Panc1 (cell line): ENCODE measurements at regions of chr20 and their contacts with region 1.

Region 1: DNA sequence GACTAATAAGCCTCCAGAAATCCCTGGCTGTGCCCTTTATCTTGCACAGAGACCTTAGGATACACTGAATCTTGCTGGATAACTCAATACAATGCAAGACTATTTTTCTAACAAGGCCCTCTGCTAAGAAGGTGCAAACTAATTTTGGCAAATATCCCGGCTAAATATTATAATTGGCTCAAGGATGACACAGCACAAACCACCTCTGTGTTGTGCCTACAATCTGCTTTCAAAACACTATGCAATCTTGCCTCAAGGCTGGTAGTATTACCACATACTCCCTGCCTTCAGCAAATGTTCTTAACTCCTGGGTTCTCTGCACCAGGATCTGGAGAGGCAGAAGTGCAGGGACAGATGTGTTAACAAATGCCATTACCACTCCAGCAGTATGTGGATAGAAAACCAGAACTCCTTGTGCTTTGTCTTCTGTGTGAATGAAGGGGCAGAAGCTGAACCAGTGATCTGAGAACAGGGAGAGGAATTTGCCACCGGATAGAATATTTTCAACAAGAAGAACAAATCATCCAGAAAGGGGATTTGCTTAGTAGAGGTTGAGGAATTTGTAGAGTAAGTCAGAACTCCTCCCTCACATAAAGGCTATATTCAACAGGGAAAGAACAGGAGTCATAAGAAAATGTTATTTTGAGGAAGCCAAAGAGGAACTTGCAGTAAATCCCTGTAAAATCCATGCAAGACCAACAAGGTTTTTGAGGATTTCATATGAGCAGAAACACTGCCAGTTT is 74.1 kb upstream of the SLC4A11 start:
- DNase-seq: no peak
- ATAC-seq: peak; percentile 62; the same call in 1 of the 2 replicates
- H3K4me3 ChIP-seq: no peak overlapping the region
- H3K27ac ChIP-seq: no peak overlapping the region
- H3K4me1 ChIP-seq: no peaks in the 10 kb centered on the region
- H3K27me3 ChIP-seq: no peaks in the 10 kb centered on the region
- CTCF ChIP-seq: no peak

Region 2: GRCh38 chr20:3051385-3052019 is 261.6 kb before region 1 on chr20:
- CTCF ChIA-PET with region 1: interaction called, 3 read pairs
- POLR2A ChIA-PET with region 1: no interaction called
- in situ Hi-C with region 1: no loop called
- intact Hi-C with region 1: loop called (anchors 10 kb)
- DNase-seq: no peak
- ATAC-seq: no peak
- H3K4me3 ChIP-seq: no peak overlapping the region
- H3K27ac ChIP-seq: no peak overlapping the region
- H3K4me1 ChIP-seq: peaks cover 3% of the 10 kb centered on the region; the same call in 1 of the 2 replicates
- H3K27me3 ChIP-seq: no peaks in the 10 kb centered on the region
- CTCF ChIP-seq: no peak

Region 3: DNA sequence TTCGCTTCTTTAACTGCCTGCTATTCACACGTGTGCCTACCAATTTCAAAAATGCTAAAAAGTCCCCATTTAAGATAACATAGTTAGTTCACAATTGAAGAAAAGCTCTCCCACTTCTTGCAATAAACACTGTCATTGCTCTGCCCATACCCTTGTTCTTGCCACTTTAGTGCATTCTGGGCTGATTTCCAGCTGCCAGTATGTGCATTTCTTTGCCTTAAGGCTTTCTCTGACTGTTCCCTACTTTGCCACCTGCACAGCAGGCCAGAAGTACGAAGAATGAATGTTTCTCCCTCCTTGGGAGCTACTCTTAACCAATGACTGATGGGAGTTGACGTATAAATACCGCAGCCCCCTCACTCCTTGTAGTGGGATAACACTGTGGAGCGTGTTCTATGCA is 141.7 kb after region 1 on chr20:
- CTCF ChIA-PET with region 1: no interaction called
- POLR2A ChIA-PET with region 1: no interaction called
- in situ Hi-C with region 1: no loop called
- intact Hi-C with region 1: no loop called
- DNase-seq: no peak
- ATAC-seq: no peak
- H3K4me3 ChIP-seq: no peak overlapping the region
- H3K27ac ChIP-seq: no peak overlapping the region
- H3K4me1 ChIP-seq: no peaks in the 10 kb centered on the region
- H3K27me3 ChIP-seq: no peaks in the 10 kb centered on the region; the same call in 1 of the 2 replicates
- CTCF ChIP-seq: no peak

Region 4: DNA sequence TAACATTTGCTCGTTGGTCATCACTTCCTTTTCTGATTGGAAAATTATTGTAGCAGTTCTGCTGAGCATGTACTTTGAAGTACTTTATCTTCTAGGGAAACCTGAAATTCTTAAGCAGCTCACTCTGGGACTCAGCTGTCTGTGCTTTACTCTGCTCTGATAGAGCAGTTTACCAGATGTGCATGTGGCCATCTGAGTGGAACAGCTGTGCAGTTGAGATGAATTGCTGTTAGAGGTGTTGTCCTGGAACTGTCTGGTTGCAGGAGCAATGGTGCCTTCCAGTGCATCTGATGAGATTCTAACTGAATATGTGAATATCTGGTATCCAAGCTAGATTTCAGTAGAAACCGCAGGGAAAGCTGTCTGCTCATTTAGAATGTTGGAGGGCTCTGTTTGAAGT is 603.3 kb after region 1 on chr20:
- CTCF ChIA-PET with region 1: no interaction called
- POLR2A ChIA-PET with region 1: interaction called, 12 read pairs
- in situ Hi-C with region 1: no loop called
- intact Hi-C with region 1: no loop called
- DNase-seq: no peak
- ATAC-seq: no peak
- H3K4me3 ChIP-seq: no peak overlapping the region
- H3K27ac ChIP-seq: no peak overlapping the region
- H3K4me1 ChIP-seq: no peaks in the 10 kb centered on the region
- H3K27me3 ChIP-seq: no peaks in the 10 kb centered on the region
- CTCF ChIP-seq: no peak